ENCODE measurements at regions of chr9 and their contacts with region 1.

Region 1: DNA sequence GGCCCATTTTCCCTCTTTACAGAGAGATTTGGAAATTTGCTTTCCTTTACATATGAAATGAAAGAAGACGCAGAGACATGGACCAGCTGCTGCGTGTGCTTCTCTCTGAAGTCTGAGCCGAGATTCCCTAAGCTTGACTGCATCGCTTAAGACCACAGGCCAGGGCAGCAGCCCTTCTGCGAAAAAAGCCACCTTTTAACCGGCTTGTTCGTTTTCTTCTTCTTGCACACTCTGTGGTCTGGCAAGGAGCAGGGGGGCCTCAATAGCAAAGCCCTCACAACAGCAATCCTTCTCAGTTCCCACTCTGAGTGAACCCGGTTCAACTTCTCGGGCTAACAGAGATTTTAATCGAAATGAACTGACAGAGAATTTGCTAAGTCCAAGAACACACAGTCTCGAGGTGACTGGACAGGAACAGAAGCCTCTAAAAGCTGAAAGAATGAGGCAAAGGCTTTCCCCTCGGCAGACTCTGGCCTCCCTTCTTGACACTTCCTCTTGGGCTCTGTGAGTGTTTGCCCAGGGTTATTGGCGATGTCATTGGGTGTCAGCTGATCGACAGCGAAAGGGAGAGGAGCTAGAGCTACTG is 512.9 kb upstream of the KLF4 start:
- DNase-seq: no peak
- H3K4me3 ChIP-seq: no peak overlapping the region
- H3K27ac ChIP-seq: no peak overlapping the region
- H3K4me1 ChIP-seq: peaks cover 15% of the 10 kb centered on the region
- H3K27me3 ChIP-seq: no peaks in the 10 kb centered on the region
- CTCF ChIP-seq: no peak

Region 2: GRCh38 chr9:107983762-107984161 is 18.7 kb before region 1 on chr9:
- CTCF ChIA-PET with region 1: interaction called, 20 read pairs
- dilution Hi-C with region 1: no loop called
- in situ Hi-C with region 1: no loop called
- intact Hi-C with region 1: no loop called
- DNase-seq: no peak
- H3K4me3 ChIP-seq: no peak overlapping the region
- H3K27ac ChIP-seq: no peak overlapping the region
- H3K4me1 ChIP-seq: peaks cover 9% of the 10 kb centered on the region
- H3K27me3 ChIP-seq: no peaks in the 10 kb centered on the region
- CTCF ChIP-seq: no peak